Mucosa of descending colon (tissue), 3 donors: ENCODE measurements at regions of chr16 and their contacts with region 1.

Region 1: DNA sequence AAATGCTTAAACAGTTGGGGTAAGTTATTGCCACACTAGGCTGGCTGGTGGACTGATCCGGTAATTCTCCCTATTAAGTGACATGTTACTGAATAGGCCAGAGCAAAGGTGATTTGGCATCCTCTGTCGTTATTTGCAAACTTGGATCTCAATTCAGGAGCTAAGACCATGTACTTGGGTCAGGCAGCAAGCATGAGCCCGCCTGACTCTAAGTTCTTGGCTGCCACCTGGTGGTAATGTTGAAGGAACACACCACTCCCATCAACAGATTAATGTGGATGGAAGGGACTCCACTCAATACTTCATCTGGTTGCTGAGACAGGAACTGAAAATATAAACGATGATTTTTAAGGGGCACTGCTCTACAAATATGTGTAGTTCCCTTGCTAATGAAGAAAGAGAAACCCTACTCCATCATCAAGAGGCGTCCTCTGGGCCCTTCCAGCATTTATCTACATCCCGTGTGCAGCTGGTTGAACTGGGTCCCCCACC is 70.8 kb downstream of the EMP2 start:
- DNase-seq: peak in 1 of 3 donors; percentile 54
- ATAC-seq: peak; percentile 94
- H3K4me3 ChIP-seq: no peak overlapping the region
- H3K4me1 ChIP-seq: no peaks in the 10 kb centered on the region
- CTCF ChIP-seq: peak; percentile 67

Region 2: GRCh38 chr16:10256784-10257641 is 252.6 kb before region 1 on chr16:
- intact Hi-C with region 1: loop called in 1 of 2 experiments (anchors 2 kb)
- DNase-seq: peak in 2 of 3 donors; percentile 13 to 37
- ATAC-seq: peak; percentile 81
- H3K4me3 ChIP-seq: no peak overlapping the region
- H3K4me1 ChIP-seq: no peaks in the 10 kb centered on the region
- CTCF ChIP-seq: peak; percentile 54

Region 3: GRCh38 chr16:10918294-10919002 is 408.9 kb after region 1 on chr16:
- intact Hi-C with region 1: loop called in 1 of 2 experiments (anchors 10 kb)
- DNase-seq: peak; percentile 82 to 98 (median 83)
- ATAC-seq: peak; percentile 95
- H3K4me3 ChIP-seq: no peak overlapping the region
- H3K4me1 ChIP-seq: no peaks in the 10 kb centered on the region
- CTCF ChIP-seq: peak; percentile 90